Mammary epithelial cell (primary cell): ENCODE measurements at regions of chr1 and their contacts with region 1.

Region 1: GRCh38 chr1:18956369-18957135 is at the start of gene IFFO2:
- DNase-seq: peak; percentile 91
- H3K4me3 ChIP-seq: peak within 1 kb of the TSS; percentile 76 to 93 (median 88)
- H3K27ac ChIP-seq: peak within 1 kb of the TSS; percentile 92
- H3K4me1 ChIP-seq: peaks cover 33% of the 10 kb centered on the region
- H3K27me3 ChIP-seq: no peaks in the 10 kb centered on the region
- CTCF ChIP-seq: no peak
- total RNA-seq, gene IFFO2: 94.8 to 304 TPM

Region 2: DNA sequence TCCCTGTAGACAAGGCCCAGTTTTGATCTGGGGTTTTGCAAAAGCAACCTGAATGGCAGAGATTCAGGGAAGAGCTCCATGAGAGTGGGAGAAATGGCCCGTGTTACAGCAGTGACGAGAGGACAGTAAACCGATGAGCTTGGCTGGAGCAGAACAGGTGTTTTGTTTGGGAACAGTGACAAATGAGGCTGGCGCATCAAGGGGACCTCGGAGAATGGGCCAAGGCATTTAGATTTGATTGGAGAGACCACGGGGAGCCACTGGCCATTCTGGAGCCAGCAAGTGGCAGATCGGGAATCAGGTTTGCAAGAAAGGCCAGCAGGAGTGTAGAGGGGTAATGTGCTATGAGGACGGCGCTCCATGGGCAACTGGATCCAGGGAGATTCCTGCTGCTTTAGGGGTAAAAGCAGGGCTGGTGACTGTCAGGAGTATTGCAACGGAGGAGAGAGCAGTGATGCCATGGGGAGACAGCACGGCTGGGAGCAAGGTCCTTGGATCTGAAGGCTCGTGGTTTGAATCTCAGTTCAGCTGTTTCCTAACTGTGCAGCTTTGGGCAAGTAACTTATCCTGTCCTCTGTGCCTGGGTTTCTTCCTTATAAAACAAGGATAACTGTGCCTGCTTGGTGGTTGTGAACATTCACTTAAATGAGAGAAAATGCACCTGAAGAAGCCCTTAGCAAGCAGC is 485.7 kb before region 1 on chr1:
- CTCF ChIA-PET with region 1: no interaction called
- dilution Hi-C with region 1: no loop called
- in situ Hi-C with region 1: no loop called
- intact Hi-C with region 1: no loop called
- DNase-seq: no peak
- H3K4me3 ChIP-seq: no peak overlapping the region
- H3K27ac ChIP-seq: no peak overlapping the region
- H3K4me1 ChIP-seq: no peaks in the 10 kb centered on the region
- H3K27me3 ChIP-seq: no peaks in the 10 kb centered on the region
- CTCF ChIP-seq: no peak

Region 3: DNA sequence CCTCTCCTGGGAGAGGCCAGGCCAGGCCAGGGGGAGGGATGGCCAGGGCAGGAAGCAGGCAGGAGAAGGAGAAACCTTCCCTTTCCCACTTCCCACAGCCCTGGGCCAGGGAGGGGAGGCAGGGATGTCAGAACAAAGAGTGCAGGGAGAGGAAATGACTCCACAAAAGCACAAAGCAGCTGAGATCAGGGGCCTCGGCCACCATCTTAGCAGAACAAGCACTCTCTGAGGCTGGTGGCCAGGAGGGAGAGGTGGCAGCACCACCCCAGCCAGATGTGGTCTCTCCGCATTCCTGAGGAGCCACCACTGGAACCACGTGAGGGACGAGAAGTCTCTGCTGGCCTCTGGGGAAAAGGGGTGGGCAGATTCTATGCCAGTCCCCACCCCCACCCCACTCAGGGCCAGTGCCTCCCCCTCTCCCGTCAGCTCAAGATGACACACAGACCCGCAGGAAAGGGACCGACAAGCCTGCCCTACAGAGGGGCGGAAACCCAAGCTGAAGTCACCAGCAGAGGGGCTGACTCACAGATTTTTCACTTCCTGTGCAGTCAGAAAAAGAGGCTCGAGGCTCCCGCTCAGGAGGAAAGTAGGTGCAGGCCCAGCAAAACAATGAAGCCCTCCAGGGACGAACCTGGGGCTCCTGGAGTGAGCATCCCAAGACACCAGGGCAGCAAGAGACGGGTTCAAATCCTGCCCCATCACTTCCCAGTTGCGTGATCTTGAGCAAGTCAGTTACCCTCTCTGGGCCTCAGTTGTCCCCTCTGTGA is 30.1 kb before region 1 on chr1:
- CTCF ChIA-PET with region 1: no interaction called
- dilution Hi-C with region 1: no loop called
- in situ Hi-C with region 1: no loop called
- intact Hi-C with region 1: loop called (anchors 1 kb)
- DNase-seq: peak; percentile 97
- H3K4me3 ChIP-seq: peak overlapping the region in 1 of 3 experiments; percentile 1
- H3K27ac ChIP-seq: peak overlapping the region; percentile 90
- H3K4me1 ChIP-seq: peaks cover 82% of the 10 kb centered on the region
- H3K27me3 ChIP-seq: no peaks in the 10 kb centered on the region
- CTCF ChIP-seq: no peak

Region 4: GRCh38 chr1:18999359-18999758 is 42.8 kb after region 1 on chr1:
- CTCF ChIA-PET with region 1: no interaction called
- dilution Hi-C with region 1: loop called (anchors 5 kb)
- in situ Hi-C with region 1: no loop called
- intact Hi-C with region 1: loop called (anchors 2 kb)
- DNase-seq: no peak
- H3K4me3 ChIP-seq: no peak overlapping the region
- H3K27ac ChIP-seq: peak overlapping the region; percentile 70
- H3K4me1 ChIP-seq: peaks cover 25% of the 10 kb centered on the region
- H3K27me3 ChIP-seq: no peaks in the 10 kb centered on the region
- CTCF ChIP-seq: no peak

Region 5: DNA sequence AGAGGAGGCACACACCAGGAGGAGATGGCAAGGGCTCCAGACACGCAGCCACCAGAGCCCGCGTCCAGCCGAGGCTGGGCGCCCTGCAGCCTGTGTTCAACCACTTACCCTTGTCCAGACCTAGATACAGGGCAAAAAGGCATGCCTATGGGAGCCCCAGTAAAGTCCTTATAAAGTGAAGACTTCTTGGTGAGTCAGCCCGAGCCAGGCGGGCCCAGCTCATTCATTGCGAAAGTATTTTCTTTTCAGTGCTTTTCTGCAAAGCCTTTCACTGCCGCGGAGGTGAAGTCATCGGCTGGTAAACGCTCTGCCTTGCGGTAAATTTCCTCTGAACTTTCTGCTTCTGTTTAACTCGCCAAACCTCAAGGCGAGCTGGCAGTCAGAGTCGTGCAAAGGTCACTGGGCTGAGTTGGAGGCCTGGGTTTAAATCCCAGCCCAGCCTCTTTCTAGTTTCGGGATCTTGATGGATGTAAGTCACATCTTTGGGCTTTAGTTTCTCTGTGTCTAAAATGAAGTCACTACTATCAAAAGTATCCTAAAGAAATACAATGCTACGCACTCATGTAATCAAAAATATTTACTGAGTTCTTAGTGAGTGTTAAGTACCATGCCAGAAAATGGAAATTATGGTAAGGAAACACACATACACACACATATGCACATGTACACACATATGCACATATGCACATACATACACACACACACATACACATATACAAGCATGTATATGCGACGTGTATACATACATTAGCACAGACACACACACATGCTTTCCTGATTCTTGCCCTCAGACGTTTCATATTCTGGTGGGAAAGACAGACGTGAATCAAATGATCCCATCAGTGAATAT is 54.7 kb after region 1 on chr1:
- CTCF ChIA-PET with region 1: no interaction called
- dilution Hi-C with region 1: no loop called
- in situ Hi-C with region 1: no loop called
- intact Hi-C with region 1: loop called (anchors 2 kb)
- DNase-seq: peak; percentile 98
- H3K4me3 ChIP-seq: no peak overlapping the region
- H3K27ac ChIP-seq: peak overlapping the region; percentile 71
- H3K4me1 ChIP-seq: peaks cover 33% of the 10 kb centered on the region
- H3K27me3 ChIP-seq: no peaks in the 10 kb centered on the region
- CTCF ChIP-seq: no peak

Region 6: GRCh38 chr1:19074902-19075721 is 118.6 kb after region 1 on chr1:
- CTCF ChIA-PET with region 1: no interaction called
- dilution Hi-C with region 1: no loop called
- in situ Hi-C with region 1: no loop called
- intact Hi-C with region 1: loop called (anchors 1 kb)
- DNase-seq: peak; percentile 97
- H3K4me3 ChIP-seq: no peak overlapping the region
- H3K27ac ChIP-seq: peak overlapping the region; percentile 71
- H3K4me1 ChIP-seq: peaks cover 48% of the 10 kb centered on the region
- H3K27me3 ChIP-seq: no peaks in the 10 kb centered on the region
- CTCF ChIP-seq: no peak